MCF 10A (cell line): ENCODE measurements at regions of chr3 and their contacts with region 1.

Region 1: DNA sequence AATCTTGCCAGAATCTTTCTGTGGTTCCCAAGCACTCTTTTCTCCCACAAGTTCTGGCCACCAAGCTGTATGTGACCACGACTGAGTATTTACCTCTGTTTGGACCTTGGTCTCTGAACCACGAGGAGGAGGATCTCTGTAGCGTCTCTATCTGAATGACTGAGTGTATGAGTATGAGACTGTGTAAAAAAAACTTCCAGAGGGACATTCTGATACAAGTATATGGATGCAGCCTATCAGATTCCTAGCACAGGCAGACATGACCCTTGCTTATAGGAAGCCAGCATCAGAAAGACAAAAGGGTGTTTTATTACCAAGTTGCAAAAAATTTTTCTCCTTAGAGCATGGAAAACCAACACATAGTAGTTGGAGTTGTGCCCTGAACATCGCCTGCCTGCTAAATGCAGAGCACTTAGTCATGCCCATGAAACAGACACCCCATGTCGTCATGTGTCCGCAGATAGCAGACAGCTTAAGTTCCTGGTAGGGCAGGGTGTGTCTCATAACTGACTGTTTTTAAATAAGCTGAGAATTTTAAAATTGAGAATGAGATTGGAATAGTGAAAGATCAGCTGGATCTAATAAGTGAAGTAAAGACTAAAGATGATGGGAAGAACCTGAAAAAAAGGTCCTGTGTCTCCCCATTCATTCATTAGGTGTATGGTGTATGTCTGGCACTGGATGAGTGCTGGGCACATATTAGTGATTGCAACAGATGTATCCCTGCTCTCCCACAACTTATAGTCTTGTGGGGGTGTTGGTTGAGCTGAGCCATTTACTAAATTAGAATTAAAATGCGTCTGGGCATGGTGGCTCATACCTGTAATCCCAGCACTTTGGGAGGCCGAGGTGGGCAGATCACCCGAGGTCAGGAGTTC is 30.9 kb downstream of the DAG1 start:
- DNase-seq: peak; percentile 96
- H3K4me3 Mint-ChIP-seq: peak overlapping the region; percentile 42
- H3K27ac Mint-ChIP-seq: peak overlapping the region; percentile 77
- H3K4me1 Mint-ChIP-seq: peaks cover 34% of the 10 kb centered on the region
- H3K27me3 Mint-ChIP-seq: no peaks in the 10 kb centered on the region
- CTCF ChIP-seq: no peak

Region 2: DNA sequence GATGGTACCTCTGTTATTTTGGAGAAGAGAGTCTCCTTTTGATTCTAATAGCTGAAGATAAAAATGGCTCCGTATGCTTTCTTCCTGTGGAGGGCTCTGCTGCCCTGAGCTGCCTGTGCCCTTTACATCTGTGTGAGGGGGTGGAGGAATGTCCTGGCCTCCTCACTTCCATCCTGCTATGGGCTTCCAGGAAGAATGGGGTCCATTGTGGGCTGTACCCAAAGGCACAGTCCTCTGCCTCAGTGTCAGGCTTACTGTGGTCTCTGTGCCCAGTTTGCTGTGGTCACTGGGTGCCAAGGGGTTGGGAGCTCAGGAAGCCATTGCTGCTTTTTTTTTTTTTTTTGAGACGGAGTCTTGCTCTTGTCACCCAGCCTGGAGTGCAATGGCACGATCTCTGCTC is 16.5 kb before region 1 on chr3:
- CTCF ChIA-PET with region 1: interaction called, 3 read pairs
- POLR2A ChIA-PET with region 1: interaction called, 13 read pairs
- intact Hi-C with region 1: no loop called
- DNase-seq: no peak
- H3K4me3 Mint-ChIP-seq: no peak overlapping the region
- H3K27ac Mint-ChIP-seq: no peak overlapping the region
- H3K4me1 Mint-ChIP-seq: peaks cover 4% of the 10 kb centered on the region
- H3K27me3 Mint-ChIP-seq: no peaks in the 10 kb centered on the region
- CTCF ChIP-seq: no peak

Region 3: DNA sequence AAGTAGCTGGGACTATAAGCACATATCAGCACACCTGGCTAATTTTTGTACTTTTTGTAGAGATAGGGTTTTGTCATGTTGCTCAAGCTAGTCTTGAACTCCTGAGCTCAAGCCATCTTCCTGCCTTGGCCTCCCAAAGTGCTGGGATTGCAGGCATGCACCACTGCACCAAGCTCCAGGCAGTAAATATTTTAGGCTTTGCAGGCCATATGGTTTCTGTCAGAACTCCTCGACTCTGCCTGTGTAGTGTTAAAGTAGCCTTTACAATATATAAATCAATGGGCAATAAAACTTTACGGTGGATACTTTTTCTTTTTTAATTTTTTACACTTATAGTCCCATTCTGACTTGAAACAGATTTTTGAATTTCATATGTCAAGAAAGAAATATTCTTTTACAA is 10.7 kb after region 1 on chr3:
- CTCF ChIA-PET with region 1: no interaction called
- POLR2A ChIA-PET with region 1: interaction called, 10 read pairs
- intact Hi-C with region 1: no loop called
- DNase-seq: no peak
- H3K4me3 Mint-ChIP-seq: no peak overlapping the region
- H3K27ac Mint-ChIP-seq: no peak overlapping the region
- H3K4me1 Mint-ChIP-seq: no peaks in the 10 kb centered on the region
- H3K27me3 Mint-ChIP-seq: no peaks in the 10 kb centered on the region
- CTCF ChIP-seq: no peak

Region 4: DNA sequence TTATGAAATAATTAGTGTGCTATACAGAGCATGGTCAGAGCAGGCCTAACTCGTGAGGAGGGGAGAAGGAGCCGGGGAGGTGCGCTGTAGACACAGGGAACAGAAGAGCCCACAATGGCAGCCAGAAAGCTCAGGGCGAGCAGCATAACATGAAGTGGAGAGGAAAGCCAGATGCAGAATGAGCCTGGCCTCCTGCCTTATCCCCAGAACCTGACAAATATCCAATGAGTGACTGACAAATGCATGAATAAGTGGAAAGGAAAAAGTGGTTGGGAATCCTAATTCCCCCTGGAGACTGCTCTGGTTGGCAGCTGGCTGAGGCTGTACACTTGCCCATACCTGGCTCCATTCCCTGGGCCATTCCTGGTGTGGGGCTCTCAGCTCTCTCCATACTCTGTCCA is 411.9 kb after region 1 on chr3:
- CTCF ChIA-PET with region 1: no interaction called
- POLR2A ChIA-PET with region 1: no interaction called
- intact Hi-C with region 1: no loop called
- DNase-seq: no peak
- H3K4me3 Mint-ChIP-seq: no peak overlapping the region
- H3K27ac Mint-ChIP-seq: no peak overlapping the region
- H3K4me1 Mint-ChIP-seq: no peaks in the 10 kb centered on the region
- H3K27me3 Mint-ChIP-seq: no peaks in the 10 kb centered on the region
- CTCF ChIP-seq: no peak